ENCODE measurements at regions of chr15 and their contacts with region 1.

Region 1: DNA sequence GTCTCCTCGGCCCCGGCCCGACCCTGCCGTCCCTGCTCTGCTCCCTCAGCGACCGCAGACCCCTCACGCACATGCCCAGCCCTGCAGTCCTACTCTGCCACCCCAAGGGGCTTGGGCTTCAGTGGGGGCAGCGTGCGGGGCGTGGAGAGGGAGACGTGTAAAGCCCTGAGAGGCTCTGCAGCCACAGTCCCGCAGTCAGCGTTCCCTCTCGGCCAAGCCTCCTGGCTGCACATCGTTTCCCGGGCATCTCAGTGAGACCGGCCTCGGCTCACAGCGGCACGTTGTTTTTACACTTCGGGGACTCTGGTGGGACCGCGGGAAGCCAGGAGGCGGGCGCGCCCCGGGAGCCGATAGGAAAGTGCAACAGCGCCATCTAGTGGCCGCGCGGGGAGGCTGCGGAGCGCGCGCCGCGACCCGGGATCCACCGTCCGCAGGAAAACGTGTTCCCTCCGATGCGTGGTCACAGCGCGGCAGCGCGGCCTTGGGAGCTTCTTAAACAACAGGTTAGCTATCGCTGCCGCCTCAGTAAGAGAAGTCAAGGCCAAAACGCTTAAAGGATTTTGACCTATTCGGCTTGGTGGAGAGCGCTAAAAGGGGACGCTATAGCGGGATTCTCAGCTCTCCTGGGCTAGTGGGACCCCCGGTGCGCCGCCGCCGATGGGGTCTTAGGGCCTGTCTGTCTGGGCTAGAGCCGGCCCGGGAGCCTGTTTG is 226.8 kb upstream of the IGF1R start:
- DNase-seq: peak; percentile 81
- ATAC-seq: peak; percentile 85
- H3K4me3 ChIP-seq: peak overlapping the region; percentile 15
- H3K27ac ChIP-seq: no peak overlapping the region
- H3K4me1 ChIP-seq: peaks cover 12% of the 10 kb centered on the region
- H3K27me3 ChIP-seq: peaks cover 28% of the 10 kb centered on the region
- CTCF ChIP-seq: peak; percentile 98

Region 2: DNA sequence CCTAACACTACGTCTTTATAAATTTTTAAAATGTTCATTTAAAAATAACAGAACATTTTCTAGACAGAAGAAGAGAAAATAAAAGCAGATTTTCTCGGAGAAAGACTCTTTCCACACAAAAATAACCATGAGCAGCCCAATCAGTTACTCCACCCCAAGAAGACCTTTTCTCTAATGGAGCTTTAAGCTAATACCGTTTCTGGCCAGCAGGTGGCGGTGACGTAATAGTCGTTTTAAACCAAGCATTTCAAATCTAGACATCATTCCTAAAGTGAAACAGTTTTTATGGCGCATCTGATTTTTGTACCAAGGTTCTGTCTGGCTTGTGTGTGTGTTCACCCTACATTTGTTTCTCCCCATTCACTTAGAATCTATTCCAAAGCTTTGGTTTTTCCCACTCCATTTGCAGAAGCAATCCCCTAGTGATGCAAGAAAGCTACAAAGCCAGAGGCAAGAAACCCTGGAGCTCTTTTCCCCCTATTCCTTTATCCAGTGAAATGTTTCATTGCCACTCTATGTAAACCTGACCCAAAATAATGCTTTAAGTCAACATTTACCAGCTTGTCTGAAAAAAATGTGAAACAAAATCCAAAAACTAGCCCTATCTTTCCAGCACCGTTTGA is 109.9 kb before region 1 on chr15:
- intact Hi-C with region 1: loop called (anchors 5 kb)
- DNase-seq: peak; percentile 70
- ATAC-seq: peak; percentile 72
- H3K4me3 ChIP-seq: no peak overlapping the region
- H3K27ac ChIP-seq: no peak overlapping the region
- H3K4me1 ChIP-seq: no peaks in the 10 kb centered on the region
- H3K27me3 ChIP-seq: no peaks in the 10 kb centered on the region
- CTCF ChIP-seq: peak; percentile 86

Region 3: DNA sequence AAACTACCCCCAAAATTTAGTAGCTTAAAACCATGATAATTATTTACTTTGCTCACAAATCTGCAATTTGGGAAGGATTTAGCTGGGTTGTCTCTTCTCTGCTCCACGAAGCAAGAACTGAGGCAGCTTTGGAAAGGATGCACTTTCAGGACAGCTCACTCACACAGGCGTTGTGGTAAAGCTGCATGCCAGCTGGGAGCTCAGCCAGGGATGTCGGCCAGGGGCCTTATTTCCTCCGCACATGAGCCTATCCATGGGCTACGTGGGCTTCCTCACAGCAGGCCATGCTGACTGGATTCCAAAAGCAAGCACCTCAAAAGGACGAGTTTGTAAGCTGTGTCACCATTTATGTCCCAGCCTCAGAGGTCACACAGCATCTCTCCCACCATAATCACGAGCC is 74.6 kb before region 1 on chr15:
- intact Hi-C with region 1: no loop called
- DNase-seq: no peak
- ATAC-seq: no peak
- H3K4me3 ChIP-seq: no peak overlapping the region
- H3K27ac ChIP-seq: no peak overlapping the region
- H3K4me1 ChIP-seq: no peaks in the 10 kb centered on the region
- H3K27me3 ChIP-seq: no peaks in the 10 kb centered on the region
- CTCF ChIP-seq: no peak